Natural killer cell (primary cell): ENCODE measurements at regions of chr16 and their contacts with region 1.

Region 1: GRCh38 chr16:67183627-67184328 is at the start of gene MATCAP1:
- DNase-seq: peak; percentile 90 to 97
- ATAC-seq: peak; percentile 93 to 97 (median 94)
- H3K4me3 ChIP-seq: peak within 1 kb of the TSS; percentile 63
- H3K4me3 Mint-ChIP-seq: peak within 1 kb of the TSS; percentile 95
- H3K27ac ChIP-seq: peak within 1 kb of the TSS; percentile 79
- H3K27ac Mint-ChIP-seq: peak within 1 kb of the TSS in 1 of 2 donors; percentile 83
- H3K4me1 ChIP-seq: peaks cover 24% of the 10 kb centered on the region
- H3K4me1 Mint-ChIP-seq: peaks cover 8 to 14% of the 10 kb centered on the region in 2 donors
- H3K27me3 ChIP-seq: peaks cover 2% of the 10 kb centered on the region
- H3K27me3 Mint-ChIP-seq: peaks cover 0 to 7% of the 10 kb centered on the region in 2 donors
- CTCF ChIP-seq: no peak
- total RNA-seq, gene MATCAP1: 7.2 to 12.6 (median 10.9) TPM

Region 2: DNA sequence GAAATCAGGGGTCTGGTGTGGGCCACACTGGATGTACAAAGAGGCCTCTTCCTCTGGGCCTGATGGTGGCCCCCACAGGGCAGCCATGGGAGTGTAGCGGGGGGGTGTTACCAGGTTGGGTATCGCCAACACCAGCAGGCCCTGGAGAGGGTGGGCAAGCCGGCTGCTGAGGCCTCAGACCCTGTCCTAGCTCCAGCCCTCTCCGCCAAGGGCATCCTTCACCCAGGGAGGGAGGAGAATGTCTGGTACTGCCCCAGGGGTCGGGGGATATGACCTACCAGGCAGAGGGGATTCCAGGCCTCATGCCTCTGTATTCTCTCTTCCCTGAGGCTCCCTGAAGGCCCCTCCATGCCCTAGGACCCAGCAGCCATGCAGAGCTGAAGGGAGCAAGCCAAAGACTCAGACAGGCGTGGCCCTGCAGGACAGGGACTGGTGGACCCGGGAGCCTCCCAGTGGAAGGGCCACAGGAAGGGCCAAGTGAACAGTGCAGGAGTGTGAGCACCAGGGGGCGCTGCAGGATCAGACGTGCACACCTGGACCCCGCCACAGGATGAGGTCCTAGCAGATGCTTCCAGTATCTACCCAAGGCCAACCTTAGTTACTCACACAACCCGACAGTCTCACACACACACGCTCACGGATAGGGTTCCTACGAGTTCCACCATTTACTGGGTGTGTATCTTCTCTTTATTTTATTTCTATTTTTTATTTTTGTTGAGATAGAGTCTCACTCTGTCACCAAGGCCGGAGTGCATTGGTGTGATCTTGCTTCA is 206.3 kb before region 1 on chr16:
- intact Hi-C with region 1: loop called (anchors 1 kb)
- DNase-seq: peak; percentile 88 to 93
- ATAC-seq: peak; percentile 93 to 100 (median 99)
- H3K4me3 ChIP-seq: no peak overlapping the region
- H3K4me3 Mint-ChIP-seq: no peak overlapping the region
- H3K27ac ChIP-seq: no peak overlapping the region
- H3K27ac Mint-ChIP-seq: no peak overlapping the region
- H3K4me1 ChIP-seq: no peaks in the 10 kb centered on the region
- H3K4me1 Mint-ChIP-seq: no peaks in the 10 kb centered on the region
- H3K27me3 ChIP-seq: no peaks in the 10 kb centered on the region
- H3K27me3 Mint-ChIP-seq: peaks cover 0 to 4% of the 10 kb centered on the region in 2 donors
- CTCF ChIP-seq: peak; percentile 92

Region 3: GRCh38 chr16:67246934-67247697 is 63.3 kb after region 1 on chr16 and contains the start of gene FHOD1:
- intact Hi-C with region 1: loop called (anchors 2 kb)
- DNase-seq: peak; percentile 95 to 99
- ATAC-seq: peak; percentile 73 to 91 (median 82)
- H3K4me3 ChIP-seq: peak within 1 kb of the TSS; percentile 65
- H3K4me3 Mint-ChIP-seq: peak within 1 kb of the TSS; percentile 96
- H3K27ac ChIP-seq: peak within 1 kb of the TSS; percentile 60
- H3K27ac Mint-ChIP-seq: peak within 1 kb of the TSS; percentile 92 to 98
- H3K4me1 ChIP-seq: peaks cover 57% of the 10 kb centered on the region
- H3K4me1 Mint-ChIP-seq: peaks cover 33 to 58% of the 10 kb centered on the region in 2 donors
- H3K27me3 ChIP-seq: peaks cover 17% of the 10 kb centered on the region
- H3K27me3 Mint-ChIP-seq: peaks cover 18 to 31% of the 10 kb centered on the region in 2 donors
- CTCF ChIP-seq: no peak
- total RNA-seq, gene FHOD1: 79.3 to 96.8 (median 89.2) TPM

Region 4: GRCh38 chr16:67697422-67698185 is 513.8 kb after region 1 on chr16:
- intact Hi-C with region 1: no loop called
- DNase-seq: no peak
- ATAC-seq: peak in 1 of 3 donors; percentile 14
- H3K4me3 ChIP-seq: no peak overlapping the region
- H3K4me3 Mint-ChIP-seq: no peak overlapping the region
- H3K27ac ChIP-seq: no peak overlapping the region
- H3K27ac Mint-ChIP-seq: no peak overlapping the region
- H3K4me1 ChIP-seq: no peaks in the 10 kb centered on the region
- H3K4me1 Mint-ChIP-seq: no peaks in the 10 kb centered on the region
- H3K27me3 ChIP-seq: no peaks in the 10 kb centered on the region
- H3K27me3 Mint-ChIP-seq: no peaks in the 10 kb centered on the region
- CTCF ChIP-seq: no peak

Region 5: GRCh38 chr16:67979955-67980678 is 796.3 kb after region 1 on chr16 and contains the start of gene DPEP3:
- intact Hi-C with region 1: no loop called
- DNase-seq: no peak
- ATAC-seq: no peak
- H3K4me3 ChIP-seq: no peak within 1 kb of the TSS
- H3K4me3 Mint-ChIP-seq: no peak within 1 kb of the TSS
- H3K27ac ChIP-seq: no peak within 1 kb of the TSS
- H3K27ac Mint-ChIP-seq: no peak within 1 kb of the TSS
- H3K4me1 ChIP-seq: peaks cover 21% of the 10 kb centered on the region
- H3K4me1 Mint-ChIP-seq: peaks cover 15% of the 10 kb centered on the region in 2 donors
- H3K27me3 ChIP-seq: no peaks in the 10 kb centered on the region
- H3K27me3 Mint-ChIP-seq: no peaks in the 10 kb centered on the region
- CTCF ChIP-seq: peak; percentile 15
- total RNA-seq, gene DPEP3: 0.53 to 1.00 (median 0.96) TPM